ENCODE measurements at regions of chr17 and their contacts with region 1.

Region 1: DNA sequence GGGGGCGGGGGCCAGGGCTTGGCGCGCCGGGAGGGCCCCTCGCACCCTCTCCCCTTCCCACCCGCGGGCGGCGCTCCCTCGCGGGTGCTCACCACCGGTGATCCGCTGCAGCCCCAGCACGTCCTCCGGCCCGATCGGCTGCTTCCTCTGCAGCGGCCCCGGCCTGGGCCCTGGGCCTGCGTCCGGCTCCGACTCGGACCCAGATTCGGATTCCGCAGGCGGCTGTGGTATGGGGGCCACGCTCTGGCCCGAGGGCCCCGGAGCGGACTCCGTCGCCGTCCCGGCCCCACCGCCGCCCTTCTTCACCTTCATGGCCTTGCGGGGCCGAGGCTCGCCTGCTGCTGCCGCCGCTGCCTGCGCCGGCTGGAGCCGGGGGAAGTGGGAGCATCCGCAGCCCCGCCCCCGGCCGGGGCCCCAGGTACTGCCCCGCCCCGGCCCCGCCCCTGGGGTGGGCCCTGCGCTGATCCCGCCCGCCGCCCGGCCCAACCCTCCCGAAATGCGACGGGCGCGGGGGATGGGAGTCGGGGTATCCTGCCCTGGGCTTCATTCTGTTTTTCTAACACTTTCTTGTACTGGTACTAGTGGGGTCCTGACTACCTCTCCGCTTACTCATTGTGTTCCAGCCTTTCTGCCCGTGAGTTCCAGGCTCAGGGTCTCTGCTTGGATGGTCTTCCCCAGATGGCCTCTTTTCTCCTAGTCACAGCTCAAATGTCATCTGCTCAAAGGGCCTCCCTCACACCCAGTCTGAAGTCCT is at the start of gene UNC119:
- DNase-seq: peak; percentile 59 to 89
- ATAC-seq: peak; percentile 75 to 91
- H3K4me3 ChIP-seq: peak within 1 kb of the TSS; percentile 97
- H3K27ac ChIP-seq: peak within 1 kb of the TSS; percentile 79 to 90
- H3K4me1 ChIP-seq: peaks cover 11% of the 10 kb centered on the region
- CTCF ChIP-seq: no peak
- EP300 ChIP-seq: no peak
- POLR2A ChIP-seq: peak; percentile 88
- RAD21 ChIP-seq: no peak
- polyA plus RNA-seq, gene UNC119: 50.5 and 53.5 TPM in 2 replicates

Region 2: DNA sequence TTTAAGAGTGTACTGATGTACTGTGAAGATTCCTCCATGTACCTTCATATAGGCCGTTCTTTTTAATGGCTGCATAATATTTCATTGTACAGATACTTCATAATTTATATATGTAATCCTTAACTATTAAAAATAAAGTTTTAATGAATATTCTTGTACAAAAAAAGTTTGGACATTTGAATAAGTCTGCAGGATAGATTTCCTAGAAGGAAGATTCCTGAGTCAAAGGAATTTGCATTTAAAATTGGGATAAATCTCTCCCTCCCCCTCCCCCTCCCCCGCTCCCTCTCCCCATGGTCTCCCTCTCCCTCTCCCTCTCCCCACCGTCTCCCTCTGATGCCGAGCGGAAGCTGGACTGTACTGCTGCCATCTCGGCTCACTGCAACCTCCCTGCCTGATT is 94.5 kb before region 1 on chr17:
- CTCF ChIA-PET with region 1: no interaction called
- POLR2A ChIA-PET with region 1: no interaction called
- DNase-seq: no peak
- ATAC-seq: no peak
- H3K4me3 ChIP-seq: no peak overlapping the region
- H3K27ac ChIP-seq: no peak overlapping the region
- H3K4me1 ChIP-seq: no peaks in the 10 kb centered on the region
- CTCF ChIP-seq: no peak
- EP300 ChIP-seq: no peak
- POLR2A ChIP-seq: no peak
- RAD21 ChIP-seq: no peak

Region 3: GRCh38 chr17:28484296-28484695 is 68.1 kb before region 1 on chr17:
- CTCF ChIA-PET with region 1: interaction called, 11 read pairs
- POLR2A ChIA-PET with region 1: no interaction called
- DNase-seq: no peak
- ATAC-seq: no peak
- H3K4me3 ChIP-seq: no peak overlapping the region
- H3K27ac ChIP-seq: no peak overlapping the region
- H3K4me1 ChIP-seq: peaks cover 11% of the 10 kb centered on the region
- CTCF ChIP-seq: no peak
- EP300 ChIP-seq: no peak
- POLR2A ChIP-seq: no peak
- RAD21 ChIP-seq: no peak

Region 4: DNA sequence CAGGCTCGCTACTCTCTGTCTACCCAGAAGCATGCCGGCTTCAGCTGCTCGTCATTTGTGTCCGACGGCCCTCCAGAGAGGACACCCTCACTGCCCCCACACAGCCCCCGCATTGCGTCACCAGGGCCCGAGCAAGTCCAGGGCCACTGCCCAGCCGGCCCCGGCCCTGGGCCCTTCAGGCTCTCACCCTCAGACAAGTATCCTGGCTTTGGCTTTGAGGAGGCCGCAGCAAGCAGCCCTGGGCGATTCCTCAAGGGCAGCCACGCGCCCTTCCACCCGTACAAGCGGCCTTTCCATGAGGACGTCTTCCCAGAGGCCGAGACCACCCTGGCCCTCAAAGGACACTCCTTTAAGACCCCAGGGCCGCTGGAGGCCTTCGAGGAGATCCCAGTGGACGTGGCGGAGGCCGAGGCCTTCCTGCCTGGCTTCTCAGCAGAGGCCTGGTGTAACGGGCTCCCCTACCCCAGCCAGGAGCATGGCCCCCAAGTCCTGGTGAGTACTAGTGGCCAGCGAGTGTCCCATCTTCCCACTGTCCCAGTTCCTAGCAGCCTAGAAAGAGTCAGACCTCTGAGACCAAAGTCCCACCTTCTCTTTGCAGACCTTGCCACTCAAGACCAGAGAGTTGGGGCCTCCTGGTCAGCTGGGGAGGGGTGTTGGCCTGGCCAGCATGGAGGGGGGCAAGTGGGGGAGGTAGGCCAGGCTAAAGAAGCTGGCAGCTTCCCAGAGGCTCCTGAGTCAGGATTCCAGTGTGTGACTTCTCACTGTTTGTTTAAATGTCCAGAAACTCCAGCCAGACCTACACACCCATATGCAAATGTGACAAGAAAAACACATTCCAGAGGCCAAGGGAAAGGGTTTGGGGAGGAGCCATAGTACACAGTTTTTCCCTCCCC is 27.7 kb before region 1 on chr17:
- CTCF ChIA-PET with region 1: interaction called, 143 read pairs
- POLR2A ChIA-PET with region 1: no interaction called
- DNase-seq: peak; percentile 56 to 70
- ATAC-seq: peak; percentile 37 to 75; a peak in 3 of 6 replicates
- H3K4me3 ChIP-seq: no peak overlapping the region
- H3K27ac ChIP-seq: peak overlapping the region; percentile 43 to 65
- H3K4me1 ChIP-seq: peaks cover 31% of the 10 kb centered on the region
- CTCF ChIP-seq: no peak
- EP300 ChIP-seq: no peak
- POLR2A ChIP-seq: no peak
- RAD21 ChIP-seq: no peak

Region 5: DNA sequence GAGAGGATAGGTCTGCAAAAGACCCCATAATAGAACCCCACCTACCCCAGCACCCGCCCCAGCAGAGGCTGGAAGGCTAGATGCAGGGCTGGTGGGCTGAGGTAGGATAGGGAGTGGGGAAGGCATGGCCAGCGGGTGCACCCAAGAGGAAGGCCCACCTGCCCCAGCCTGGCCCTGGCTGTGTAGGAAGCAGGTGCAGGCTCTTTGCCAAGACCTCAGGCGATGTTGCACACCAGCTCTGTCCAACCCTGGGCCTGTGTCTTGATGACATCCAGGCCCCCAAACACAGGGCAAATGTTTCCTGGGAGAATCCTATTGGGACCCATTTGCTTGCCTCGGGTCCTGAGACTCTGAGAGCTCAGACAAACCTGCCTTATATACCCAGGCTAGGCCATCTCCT is 12.2 kb before region 1 on chr17:
- CTCF ChIA-PET with region 1: interaction called, 143 read pairs
- POLR2A ChIA-PET with region 1: no interaction called
- DNase-seq: no peak
- ATAC-seq: peak in 1 of 2 experiments; percentile 9; a peak in 2 of 6 replicates
- H3K4me3 ChIP-seq: no peak overlapping the region
- H3K27ac ChIP-seq: no peak overlapping the region
- H3K4me1 ChIP-seq: 0 out of 3 replicates have a peak, but pooled peaks cover 5% of the 10 kb centered on the region
- CTCF ChIP-seq: no peak
- EP300 ChIP-seq: no peak
- POLR2A ChIP-seq: no peak
- RAD21 ChIP-seq: no peak

Region 6: DNA sequence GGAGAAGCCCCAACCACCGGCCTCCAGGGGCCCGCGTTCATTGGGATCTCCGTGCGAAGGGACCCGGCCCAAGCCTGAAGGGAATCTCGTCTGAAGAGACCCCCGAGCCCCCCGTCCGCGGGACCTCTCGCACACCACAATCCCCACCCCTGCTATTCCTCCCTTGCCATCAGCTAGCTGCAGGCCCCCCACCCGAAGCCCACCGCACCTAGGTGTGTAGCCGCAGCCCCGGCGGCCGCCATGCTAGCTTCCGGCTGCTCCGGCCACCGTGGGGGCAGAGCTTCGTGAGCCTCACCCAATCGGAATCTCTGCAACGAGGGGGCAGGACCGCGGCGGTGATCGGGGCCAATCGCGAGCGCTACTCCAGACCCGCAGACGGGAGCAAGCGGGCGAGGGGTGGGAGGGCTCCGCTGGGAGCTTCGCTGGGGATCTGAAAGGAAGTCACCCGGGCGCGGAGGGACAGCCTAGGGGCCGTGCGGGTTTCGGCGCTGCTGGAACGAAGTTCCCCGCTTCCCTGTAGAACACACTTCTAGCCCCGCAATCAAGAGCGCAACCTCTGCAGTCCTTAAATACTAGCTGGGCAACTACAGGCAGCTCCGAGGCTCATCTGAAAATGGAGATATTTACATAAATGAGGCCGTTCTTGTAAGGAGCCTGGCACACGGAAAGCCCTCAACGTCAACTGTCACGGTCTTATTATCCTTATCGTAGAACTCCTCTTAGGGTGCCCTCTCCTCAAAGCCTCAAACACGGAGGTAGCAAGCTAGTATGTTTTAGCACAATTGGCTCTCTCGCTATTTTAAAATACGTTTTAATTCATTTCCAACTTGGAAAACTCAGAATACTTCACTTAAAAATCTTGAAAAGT is 19.1 kb after region 1 on chr17 and contains the start of gene PIGS:
- CTCF ChIA-PET with region 1: interaction called, 24 read pairs
- POLR2A ChIA-PET with region 1: interaction called, 4 read pairs
- DNase-seq: peak; percentile 92 to 100
- ATAC-seq: peak; percentile 93 to 99
- H3K4me3 ChIP-seq: peak within 1 kb of the TSS; percentile 92
- H3K27ac ChIP-seq: peak within 1 kb of the TSS; percentile 87 to 91
- H3K4me1 ChIP-seq: peaks cover 26% of the 10 kb centered on the region
- CTCF ChIP-seq: no peak
- EP300 ChIP-seq: no peak
- POLR2A ChIP-seq: peak; percentile 84
- RAD21 ChIP-seq: no peak
- polyA plus RNA-seq, gene PIGS: 50.0 and 53.2 TPM in 2 replicates

Region 7: GRCh38 chr17:28842282-28843012 is 290.0 kb after region 1 on chr17 and contains the start of gene FAM222B:
- CTCF ChIA-PET with region 1: no interaction called
- POLR2A ChIA-PET with region 1: no interaction called
- DNase-seq: peak; percentile 87 to 100
- ATAC-seq: peak; percentile 99 to 100
- H3K4me3 ChIP-seq: peak within 1 kb of the TSS; percentile 82
- H3K27ac ChIP-seq: peak within 1 kb of the TSS; percentile 82 to 92
- H3K4me1 ChIP-seq: peaks cover 11% of the 10 kb centered on the region; the same call in 1 of the 3 replicates
- CTCF ChIP-seq: no peak
- EP300 ChIP-seq: no peak
- POLR2A ChIP-seq: peak; percentile 79
- RAD21 ChIP-seq: no peak; a peak in 1 of 5 replicates
- polyA plus RNA-seq, gene FAM222B: 10.7 and 15.3 TPM in 2 replicates